ENCODE measurements at regions of chr1 and their contacts with region 1.

Region 1: GRCh38 chr1:54944610-54945544 is 35.6 kb upstream of the TMEM61 start:
- DNase-seq: peak; percentile 26
- ATAC-seq: peak; percentile 91
- H3K4me3 ChIP-seq: no peak overlapping the region
- H3K27ac ChIP-seq: no peak overlapping the region
- H3K4me1 ChIP-seq: no peaks in the 10 kb centered on the region
- H3K27me3 ChIP-seq: no peaks in the 10 kb centered on the region; a peak in 1 of 4 replicates
- CTCF ChIP-seq: peak; percentile 78 to 87 (median 81)
- EP300 ChIP-seq: no peak
- POLR2A ChIP-seq: no peak
- RAD21 ChIP-seq: peak; percentile 82

Region 2: DNA sequence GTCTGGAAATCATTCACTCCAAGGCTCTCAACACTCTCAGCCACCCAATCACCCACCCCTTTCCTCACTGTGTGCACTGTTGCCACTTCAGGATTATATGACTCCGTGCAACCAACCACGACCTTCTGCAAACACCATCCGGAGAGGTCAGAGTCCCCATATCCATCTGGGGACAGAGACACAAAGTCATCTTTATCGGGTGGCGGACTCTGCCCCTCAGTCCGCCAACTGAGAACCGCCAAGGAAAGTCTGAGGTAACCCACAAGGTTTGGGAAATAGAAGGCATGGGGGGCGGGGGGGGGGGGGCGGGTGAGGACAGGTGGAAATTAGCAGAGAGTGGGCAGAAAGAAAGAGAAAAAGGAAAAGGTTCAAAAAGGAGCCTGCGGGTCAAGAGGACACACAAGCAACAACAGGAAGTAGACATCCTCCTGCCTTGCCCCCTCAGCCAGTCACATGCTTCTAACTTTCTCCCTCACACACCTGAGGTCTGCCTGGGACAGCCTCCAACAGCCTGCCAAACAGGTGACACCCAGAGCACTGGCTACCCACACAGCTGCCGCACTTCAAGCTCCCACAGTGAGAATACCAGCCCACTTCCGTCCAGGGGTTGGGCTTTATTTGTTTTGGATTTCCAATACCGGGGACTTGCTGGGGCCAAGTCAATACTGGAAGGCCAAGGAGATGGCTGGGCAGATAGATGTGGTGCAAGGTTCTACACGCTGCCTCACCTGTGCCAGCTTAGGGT is 596.8 kb before region 1 on chr1:
- CTCF ChIA-PET with region 1: no interaction called
- POLR2A ChIA-PET with region 1: no interaction called
- RAD21 ChIA-PET with region 1: no interaction called
- SMC1A ChIA-PET with region 1: no interaction called
- in situ Hi-C with region 1: no loop called
- intact Hi-C with region 1: no loop called
- DNase-seq: no peak
- ATAC-seq: no peak
- H3K4me3 ChIP-seq: no peak overlapping the region
- H3K27ac ChIP-seq: no peak overlapping the region
- H3K4me1 ChIP-seq: no peaks in the 10 kb centered on the region
- H3K27me3 ChIP-seq: no peaks in the 10 kb centered on the region
- CTCF ChIP-seq: no peak
- EP300 ChIP-seq: no peak
- POLR2A ChIP-seq: no peak
- RAD21 ChIP-seq: no peak

Region 3: GRCh38 chr1:54934869-54935268 is 10.0 kb before region 1 on chr1:
- CTCF ChIA-PET with region 1: interaction called, 23 read pairs
- POLR2A ChIA-PET with region 1: no interaction called
- RAD21 ChIA-PET with region 1: interaction called, 5 read pairs
- SMC1A ChIA-PET with region 1: interaction called, 8 read pairs
- in situ Hi-C with region 1: no loop called
- intact Hi-C with region 1: no loop called
- DNase-seq: no peak
- ATAC-seq: no peak
- H3K4me3 ChIP-seq: no peak overlapping the region
- H3K27ac ChIP-seq: no peak overlapping the region
- H3K4me1 ChIP-seq: no peaks in the 10 kb centered on the region
- H3K27me3 ChIP-seq: no peaks in the 10 kb centered on the region; a peak in 1 of 4 replicates
- CTCF ChIP-seq: no peak
- EP300 ChIP-seq: no peak
- POLR2A ChIP-seq: no peak
- RAD21 ChIP-seq: no peak

Region 4: DNA sequence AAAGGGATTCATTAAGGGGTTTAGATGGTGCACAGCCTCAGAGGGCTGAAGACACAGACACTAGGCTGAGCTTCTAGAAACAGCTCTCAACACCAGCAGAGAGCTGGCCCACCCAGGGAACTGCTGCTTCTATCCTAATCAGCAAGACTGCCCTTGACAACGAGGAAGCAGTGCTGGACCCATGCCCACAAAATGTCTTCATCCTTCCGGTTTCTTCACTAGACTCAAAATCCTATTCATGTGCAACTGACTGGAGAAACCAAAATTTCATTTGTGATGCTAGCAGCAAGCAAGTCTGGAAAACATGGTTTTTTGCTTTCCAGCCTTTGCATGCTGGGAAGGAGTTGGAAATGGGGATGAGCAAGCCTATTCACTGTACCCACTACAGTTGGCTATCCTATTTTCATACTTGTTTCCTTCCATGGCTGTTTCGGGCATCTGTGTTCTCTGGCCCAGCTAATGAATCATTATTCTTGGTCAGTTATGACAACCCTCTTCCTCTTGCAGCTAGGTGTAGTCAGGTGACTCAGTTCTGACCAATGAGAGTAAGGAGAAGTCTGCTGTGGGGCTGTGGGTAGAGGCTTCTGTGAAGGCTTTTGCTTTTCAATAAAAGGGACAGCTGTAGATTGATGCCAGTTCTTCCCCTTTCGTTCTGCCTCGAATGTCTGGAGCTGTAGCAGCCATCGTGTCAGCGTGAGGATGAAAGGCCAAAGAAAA is 20.9 kb after region 1 on chr1:
- CTCF ChIA-PET with region 1: interaction called, 43 read pairs
- POLR2A ChIA-PET with region 1: no interaction called
- RAD21 ChIA-PET with region 1: interaction called, 7 read pairs
- SMC1A ChIA-PET with region 1: interaction called, 16 read pairs
- in situ Hi-C with region 1: no loop called
- intact Hi-C with region 1: no loop called
- DNase-seq: peak; percentile 60
- ATAC-seq: peak; percentile 97
- H3K4me3 ChIP-seq: no peak overlapping the region
- H3K27ac ChIP-seq: peak overlapping the region; percentile 34; the same call in 1 of the 2 replicates
- H3K4me1 ChIP-seq: peaks cover 13% of the 10 kb centered on the region
- H3K27me3 ChIP-seq: no peaks in the 10 kb centered on the region
- CTCF ChIP-seq: no peak
- EP300 ChIP-seq: no peak
- POLR2A ChIP-seq: no peak
- RAD21 ChIP-seq: no peak

Region 5: DNA sequence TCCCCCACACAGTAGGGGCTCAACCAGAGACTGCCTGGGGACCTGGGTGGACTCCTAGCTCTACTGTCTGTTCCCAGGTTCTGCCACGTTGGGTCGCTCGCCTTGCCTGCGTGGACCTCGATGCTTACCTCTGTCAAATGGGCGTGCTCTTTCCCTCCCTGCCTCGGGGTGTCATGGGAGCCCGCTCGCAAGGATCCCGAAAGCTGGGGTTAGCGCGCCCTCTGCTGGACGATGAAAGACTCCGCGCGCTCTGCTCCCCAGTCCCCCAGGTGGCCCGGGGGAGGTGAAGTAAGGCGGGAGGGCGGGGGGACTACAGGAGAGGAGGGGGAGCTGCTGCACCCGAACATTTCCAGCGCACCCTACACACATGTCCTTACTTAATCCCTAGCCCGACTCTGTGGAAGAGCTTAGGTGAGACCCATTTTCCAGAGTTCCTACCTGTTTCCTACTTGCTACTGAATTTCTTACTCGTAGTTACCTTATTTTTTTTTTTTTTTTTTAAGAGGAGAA is 51.5 kb after region 1 on chr1:
- CTCF ChIA-PET with region 1: interaction called, 436 read pairs
- POLR2A ChIA-PET with region 1: no interaction called
- RAD21 ChIA-PET with region 1: interaction called, 156 read pairs
- SMC1A ChIA-PET with region 1: interaction called, 147 read pairs
- in situ Hi-C with region 1: loop called (anchors 5 kb)
- intact Hi-C with region 1: loop called (anchors 1 kb)
- DNase-seq: no peak
- ATAC-seq: peak; percentile 97
- H3K4me3 ChIP-seq: no peak overlapping the region
- H3K27ac ChIP-seq: no peak overlapping the region
- H3K4me1 ChIP-seq: peaks cover 3% of the 10 kb centered on the region; the same call in 1 of the 2 replicates
- H3K27me3 ChIP-seq: peaks cover 2 to 5% of the 10 kb centered on the region in 2 experiments
- CTCF ChIP-seq: peak; percentile 59 to 88 (median 87)
- EP300 ChIP-seq: no peak
- POLR2A ChIP-seq: no peak
- RAD21 ChIP-seq: peak; percentile 97

Region 6: GRCh38 chr1:55021965-55022546 is 77.2 kb after region 1 on chr1:
- CTCF ChIA-PET with region 1: interaction called, 218 read pairs
- POLR2A ChIA-PET with region 1: no interaction called
- RAD21 ChIA-PET with region 1: interaction called, 39 read pairs
- SMC1A ChIA-PET with region 1: interaction called, 37 read pairs
- in situ Hi-C with region 1: no loop called
- intact Hi-C with region 1: loop called (anchors 1 kb)
- DNase-seq: peak; percentile 1
- ATAC-seq: peak; percentile 100
- H3K4me3 ChIP-seq: no peak overlapping the region
- H3K27ac ChIP-seq: no peak overlapping the region
- H3K4me1 ChIP-seq: no peaks in the 10 kb centered on the region
- H3K27me3 ChIP-seq: no peaks in the 10 kb centered on the region
- CTCF ChIP-seq: peak; percentile 90 to 94 (median 91)
- EP300 ChIP-seq: no peak
- POLR2A ChIP-seq: no peak
- RAD21 ChIP-seq: peak; percentile 67

Region 7: GRCh38 chr1:55500601-55501000 is 555.7 kb after region 1 on chr1:
- CTCF ChIA-PET with region 1: no interaction called
- POLR2A ChIA-PET with region 1: no interaction called
- RAD21 ChIA-PET with region 1: no interaction called
- SMC1A ChIA-PET with region 1: no interaction called
- in situ Hi-C with region 1: no loop called
- intact Hi-C with region 1: no loop called
- DNase-seq: no peak
- ATAC-seq: no peak
- H3K4me3 ChIP-seq: no peak overlapping the region
- H3K27ac ChIP-seq: no peak overlapping the region
- H3K4me1 ChIP-seq: no peaks in the 10 kb centered on the region
- H3K27me3 ChIP-seq: no peaks in the 10 kb centered on the region; a peak in 1 of 4 replicates
- CTCF ChIP-seq: no peak
- EP300 ChIP-seq: no peak
- POLR2A ChIP-seq: no peak
- RAD21 ChIP-seq: no peak

Measured in GM12878 (cell line).